ENCODE measurements at regions of chr13 and their contacts with region 1.

Region 1: DNA sequence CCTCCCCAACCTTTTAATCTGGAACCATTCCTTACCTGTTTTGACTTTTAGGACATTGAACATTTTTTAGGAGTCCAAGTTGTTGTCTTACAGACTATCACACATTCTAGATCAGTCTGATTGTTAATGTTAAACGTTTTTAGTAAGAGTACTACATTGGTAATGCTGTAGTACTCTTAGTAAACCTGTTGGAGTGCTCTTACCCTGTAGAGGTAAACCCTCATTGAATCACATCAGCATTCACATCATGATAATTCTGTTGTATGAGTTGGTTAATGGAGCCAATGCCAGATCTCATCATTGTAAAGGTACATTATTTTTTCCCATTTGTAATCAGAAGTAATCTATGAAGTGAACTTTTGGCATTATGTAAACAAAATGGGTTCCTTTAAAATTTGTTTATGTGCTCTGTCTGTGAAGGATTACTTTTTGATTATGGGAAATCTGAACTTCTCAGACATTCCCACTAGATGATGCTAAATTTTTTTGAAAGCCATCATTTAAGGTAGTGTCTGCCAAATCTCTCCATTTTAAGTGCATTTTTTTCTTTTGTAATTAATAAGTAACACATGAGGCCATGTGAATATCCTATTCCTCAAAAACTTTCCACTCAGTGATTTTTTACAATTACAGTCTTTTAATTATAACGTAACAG is 55.2 kb downstream of the VWA8 start:
- DNase-seq: no peak
- H3K4me3 Mint-ChIP-seq: no peak overlapping the region
- H3K27ac Mint-ChIP-seq: no peak overlapping the region
- H3K4me1 Mint-ChIP-seq: peaks cover 24% of the 10 kb centered on the region
- H3K27me3 Mint-ChIP-seq: no peaks in the 10 kb centered on the region

Region 2: DNA sequence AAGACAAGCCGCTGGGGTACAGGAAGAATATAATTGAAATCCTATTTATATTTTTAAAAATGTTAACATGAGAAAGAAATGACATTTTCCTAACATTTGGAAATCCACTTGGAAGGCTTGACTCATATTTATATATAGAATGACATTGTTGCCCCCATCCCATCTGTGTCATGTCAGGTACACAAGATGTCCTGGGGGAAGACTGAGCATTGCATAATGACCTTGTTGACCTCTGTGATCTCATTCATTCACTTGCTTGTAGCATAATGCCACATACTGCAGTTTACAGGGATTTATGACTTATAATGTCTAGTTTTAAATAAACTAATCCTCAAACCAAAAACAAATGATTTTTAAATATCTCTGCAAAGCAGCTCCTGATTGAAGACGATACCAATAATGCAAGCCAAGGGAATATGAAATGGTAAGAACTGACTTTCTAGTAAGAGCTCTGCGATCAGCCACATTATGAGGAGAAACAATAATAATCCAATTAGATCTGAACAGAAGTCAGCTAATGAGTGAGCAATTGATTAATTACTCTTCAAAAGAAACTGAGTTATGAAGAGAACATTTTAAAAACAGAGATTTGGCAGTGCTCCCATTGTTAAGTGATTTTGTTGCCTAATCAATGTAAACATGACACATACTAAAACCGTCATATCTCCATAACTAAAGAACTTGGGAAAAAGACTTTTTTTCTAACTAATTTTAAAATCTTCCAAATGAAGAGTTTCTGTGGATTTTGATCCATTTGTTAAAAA is 76.4 kb after region 1 on chr13:
- CTCF ChIA-PET with region 1: no interaction called
- intact Hi-C with region 1: loop called (anchors 2 kb)
- DNase-seq: no peak
- H3K4me3 Mint-ChIP-seq: no peak overlapping the region
- H3K27ac Mint-ChIP-seq: no peak overlapping the region
- H3K4me1 Mint-ChIP-seq: peaks cover 4% of the 10 kb centered on the region
- H3K27me3 Mint-ChIP-seq: peaks cover 7% of the 10 kb centered on the region

Region 3: GRCh38 chr13:42039946-42040729 is 134.4 kb after region 1 on chr13:
- CTCF ChIA-PET with region 1: interaction called, 3 read pairs
- intact Hi-C with region 1: loop called (anchors 1 kb)
- DNase-seq: peak; percentile 86
- H3K4me3 Mint-ChIP-seq: peak overlapping the region; percentile 78
- H3K27ac Mint-ChIP-seq: peak overlapping the region; percentile 73
- H3K4me1 Mint-ChIP-seq: peaks cover 20% of the 10 kb centered on the region
- H3K27me3 Mint-ChIP-seq: no peaks in the 10 kb centered on the region

Region 4: DNA sequence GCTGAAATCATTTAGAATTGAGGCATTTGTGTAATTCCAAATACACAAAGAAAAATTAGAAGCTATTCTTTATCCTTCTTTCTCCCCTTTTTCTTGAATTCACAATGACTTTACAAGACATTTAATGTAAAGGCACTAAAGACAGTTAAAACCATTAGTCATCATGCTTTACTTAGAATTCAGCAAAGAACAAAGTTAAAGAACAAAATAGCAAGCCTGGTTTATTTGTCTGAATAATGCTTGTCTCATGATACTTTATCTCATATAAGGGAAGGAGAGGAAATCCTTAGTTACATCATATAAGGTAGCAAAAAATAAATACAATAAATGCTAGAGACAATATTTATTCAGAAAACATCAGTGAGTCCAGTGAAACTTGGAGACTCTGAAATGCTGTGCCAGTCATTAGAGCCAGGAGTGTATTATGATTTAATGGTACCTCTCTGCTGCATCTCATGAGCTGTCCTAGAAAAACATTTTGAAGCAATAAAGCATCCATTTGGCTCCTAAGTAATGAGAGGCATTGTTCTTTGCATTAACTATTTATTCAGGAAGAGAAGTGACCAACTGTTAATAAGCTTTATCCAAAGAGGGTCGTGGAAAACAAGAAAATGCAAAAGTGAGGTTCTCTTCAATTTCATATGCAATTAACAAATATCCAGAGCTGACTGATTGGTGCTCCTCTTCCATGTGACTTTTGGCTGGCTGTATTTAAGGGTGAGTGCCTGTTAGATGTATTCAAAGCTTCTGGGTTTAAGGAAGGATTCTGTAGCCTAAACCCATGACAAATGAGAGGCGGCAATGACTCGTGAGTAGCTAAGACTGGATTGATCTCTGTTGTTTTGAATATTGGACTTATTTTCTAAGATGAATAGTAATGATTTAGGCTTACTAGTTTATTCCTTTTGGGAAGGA is 247.7 kb after region 1 on chr13:
- CTCF ChIA-PET with region 1: no interaction called
- intact Hi-C with region 1: no loop called
- DNase-seq: no peak
- H3K4me3 Mint-ChIP-seq: no peak overlapping the region
- H3K27ac Mint-ChIP-seq: no peak overlapping the region
- H3K4me1 Mint-ChIP-seq: peaks cover 6% of the 10 kb centered on the region
- H3K27me3 Mint-ChIP-seq: no peaks in the 10 kb centered on the region

Region 5: DNA sequence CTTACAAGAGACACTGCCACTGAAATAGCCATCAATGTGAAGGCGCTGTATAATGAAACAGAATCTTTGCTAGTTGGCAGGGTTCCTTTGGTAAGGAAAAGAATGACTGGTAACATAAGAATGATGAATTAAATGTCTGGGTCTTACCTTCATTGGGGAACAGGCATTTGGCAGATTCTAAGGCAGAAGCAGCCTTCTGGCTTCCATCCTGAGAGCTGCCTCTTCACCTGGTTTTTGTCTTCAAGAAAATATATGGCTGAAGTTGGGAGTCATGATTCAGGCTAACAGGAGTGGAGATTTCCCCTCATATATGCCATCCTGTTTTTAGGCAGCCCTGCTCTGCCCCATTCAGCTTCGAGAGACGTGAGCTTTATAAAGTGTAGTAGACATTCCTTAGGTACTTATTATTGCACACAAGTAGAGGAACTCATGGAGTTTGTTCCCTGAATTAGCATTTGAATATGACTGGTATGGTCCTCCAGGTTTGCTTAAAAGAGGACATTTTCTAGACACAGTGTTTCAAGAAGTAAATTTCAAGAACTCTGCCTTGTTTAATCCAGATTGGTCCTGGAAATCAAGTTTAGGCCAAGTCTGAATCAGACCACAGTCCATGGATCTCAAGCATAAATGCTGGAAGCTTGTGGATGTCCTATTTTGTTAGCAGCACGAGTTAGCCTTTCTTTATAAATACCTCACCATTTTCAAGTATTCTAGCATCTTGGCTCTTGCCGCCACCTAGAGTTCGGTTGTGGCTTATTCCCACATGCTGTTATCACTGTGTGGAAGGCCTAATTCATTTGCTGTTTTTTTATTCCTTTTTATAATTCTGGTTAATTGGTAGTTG is 310.1 kb after region 1 on chr13:
- CTCF ChIA-PET with region 1: no interaction called
- intact Hi-C with region 1: loop called (anchors 5 kb)
- DNase-seq: peak; percentile 62
- H3K4me3 Mint-ChIP-seq: no peak overlapping the region
- H3K27ac Mint-ChIP-seq: no peak overlapping the region
- H3K4me1 Mint-ChIP-seq: no peaks in the 10 kb centered on the region
- H3K27me3 Mint-ChIP-seq: no peaks in the 10 kb centered on the region

Measured in activated naive CD4-positive, alpha-beta T cell treated with anti-CD3 and anti-CD28 coated beads for 36 hours (primary cell).